ENCODE measurements at regions of chr14 and their contacts with region 1.

Region 1: GRCh38 chr14:64671591-64671990 is 32.6 kb upstream of the PLEKHG3 start:
- DNase-seq: peak; percentile 37 to 50 (median 47)
- ATAC-seq: peak; percentile 78
- H3K4me3 ChIP-seq: no peak overlapping the region
- H3K27ac ChIP-seq: no peak overlapping the region
- H3K4me1 ChIP-seq: no peaks in the 10 kb centered on the region
- H3K27me3 ChIP-seq: peaks cover 0 to 30% of the 10 kb centered on the region in 2 experiments; a peak in 3 of 5 replicates
- CTCF ChIP-seq: peak; percentile 44 to 62 (median 52); a peak in 5 of 6 replicates
- EP300 ChIP-seq: no peak
- POLR2A ChIP-seq: no peak
- RAD21 ChIP-seq: peak; percentile 62 to 82

Region 2: GRCh38 chr14:64736271-64737122 is 64.9 kb after region 1 on chr14:
- CTCF ChIA-PET with region 1: no interaction called
- POLR2A ChIA-PET with region 1: no interaction called
- in situ Hi-C with region 1: no loop called
- intact Hi-C with region 1: loop called (anchors 5 kb)
- DNase-seq: peak; percentile 16 to 23 (median 20)
- ATAC-seq: peak; percentile 80
- H3K4me3 ChIP-seq: no peak overlapping the region
- H3K27ac ChIP-seq: no peak overlapping the region
- H3K4me1 ChIP-seq: peaks cover 0 to 4% of the 10 kb centered on the region in 2 experiments; a peak in 2 of 5 replicates
- H3K27me3 ChIP-seq: peaks cover 3 to 58% of the 10 kb centered on the region in 2 experiments; a peak in 4 of 5 replicates
- CTCF ChIP-seq: peak in 2 of 3 experiments; percentile 8 to 27; a peak in 1 of 6 replicates
- EP300 ChIP-seq: no peak
- POLR2A ChIP-seq: no peak
- RAD21 ChIP-seq: 0 out of 4 replicates have a peak, but pooled peaks of 1 of the 2 experiments have one; percentile 23

Region 3: DNA sequence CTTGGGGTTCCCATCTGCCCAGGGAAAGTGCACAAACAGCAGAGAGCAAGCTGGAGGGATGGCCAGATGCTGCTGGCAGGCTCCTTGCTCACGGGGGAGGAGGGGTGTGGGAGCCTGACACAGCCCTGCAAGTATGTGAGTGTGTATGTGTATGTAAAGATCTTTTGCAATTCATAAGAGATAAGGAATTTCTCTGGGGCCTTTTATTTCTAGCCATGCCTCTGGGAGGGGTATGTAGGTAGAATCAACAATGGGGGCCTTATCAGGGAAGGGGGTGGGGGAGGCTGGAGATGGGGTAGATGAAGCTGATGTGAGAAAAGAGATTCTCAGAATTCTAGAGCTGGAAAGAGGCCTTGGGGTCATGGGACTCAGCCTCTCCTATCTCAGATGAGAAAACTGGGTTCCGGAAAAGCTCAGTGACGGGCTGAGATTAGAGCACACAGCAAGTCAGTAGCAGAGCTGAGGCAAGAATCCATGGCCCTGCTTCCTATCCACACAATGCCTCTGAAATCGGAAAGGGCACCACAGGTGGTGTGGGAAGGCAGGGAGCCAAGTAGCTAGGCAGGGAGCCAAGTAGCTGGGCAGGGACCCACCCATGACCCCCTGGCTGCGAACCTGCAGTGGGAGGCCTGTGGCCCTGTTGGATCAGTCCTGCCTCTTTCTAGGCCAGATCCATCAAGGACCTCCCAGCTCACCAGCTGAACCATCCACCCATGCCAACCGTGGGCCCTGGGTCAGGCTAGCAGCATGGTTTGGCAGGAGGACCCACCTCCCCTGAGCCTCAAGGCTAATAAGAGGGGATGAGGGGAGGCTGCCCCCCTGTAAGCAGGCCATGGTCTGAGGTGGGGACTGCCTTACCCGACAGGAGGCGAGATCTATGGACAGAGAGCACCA is 87.3 kb after region 1 on chr14:
- CTCF ChIA-PET with region 1: no interaction called
- POLR2A ChIA-PET with region 1: no interaction called
- in situ Hi-C with region 1: loop called (anchors 5 kb)
- intact Hi-C with region 1: loop called (anchors 5 kb)
- DNase-seq: no peak
- ATAC-seq: no peak
- H3K4me3 ChIP-seq: no peak overlapping the region
- H3K27ac ChIP-seq: no peak overlapping the region
- H3K4me1 ChIP-seq: peaks cover 12 to 19% of the 10 kb centered on the region in 2 experiments; a peak in 4 of 5 replicates
- H3K27me3 ChIP-seq: peaks cover 2 to 29% of the 10 kb centered on the region in 2 experiments; a peak in 3 of 5 replicates
- CTCF ChIP-seq: no peak
- EP300 ChIP-seq: no peak
- POLR2A ChIP-seq: no peak
- RAD21 ChIP-seq: no peak

Region 4: DNA sequence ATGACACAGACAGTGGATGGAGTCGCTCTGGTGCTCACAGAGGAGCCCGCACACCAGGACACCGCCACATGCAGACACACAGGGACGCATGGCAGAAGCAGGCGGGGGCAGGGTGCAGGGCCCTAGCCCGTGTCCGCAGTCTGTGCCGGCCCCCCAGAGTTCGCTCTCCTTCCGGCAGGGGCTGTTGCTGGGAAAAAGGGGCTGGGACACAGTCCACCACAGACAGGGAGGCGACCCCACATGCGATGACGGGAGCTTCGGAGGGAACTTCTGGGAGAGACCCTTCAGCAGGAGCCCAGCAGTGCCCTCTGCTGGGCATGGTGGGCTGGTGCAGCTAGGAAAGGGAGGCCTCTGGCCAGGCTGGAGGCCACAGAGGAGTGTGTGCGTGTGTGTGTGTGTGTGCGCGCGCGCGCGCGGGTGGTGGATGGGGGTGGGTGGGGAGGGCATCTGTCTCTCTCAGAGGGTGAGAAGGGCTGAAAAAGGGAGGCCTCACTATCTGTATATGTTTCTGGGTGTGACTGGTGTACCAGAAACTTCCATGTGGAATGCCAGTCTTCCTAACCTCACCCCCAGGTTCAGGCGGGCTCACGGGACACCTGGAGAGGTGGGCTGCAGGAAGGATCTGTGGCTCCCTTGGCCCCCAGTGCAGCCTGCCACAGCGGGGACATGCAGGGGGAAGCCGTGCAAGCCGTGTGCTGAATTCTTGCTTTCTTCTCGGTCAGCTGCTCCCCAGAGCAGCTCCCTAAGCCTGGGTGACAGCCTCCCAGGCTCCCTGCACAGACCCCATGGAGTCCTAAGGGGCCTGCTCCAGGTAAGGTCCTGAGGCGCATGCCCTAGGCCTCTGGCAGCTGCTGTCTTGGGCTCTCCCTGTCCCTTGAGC is 93.3 kb after region 1 on chr14:
- CTCF ChIA-PET with region 1: interaction called, 3 read pairs
- POLR2A ChIA-PET with region 1: no interaction called
- in situ Hi-C with region 1: no loop called
- intact Hi-C with region 1: loop called (anchors 5 kb)
- DNase-seq: peak; percentile 55 to 66 (median 63)
- ATAC-seq: peak; percentile 71
- H3K4me3 ChIP-seq: no peak overlapping the region
- H3K27ac ChIP-seq: no peak overlapping the region
- H3K4me1 ChIP-seq: peaks cover 12 to 30% of the 10 kb centered on the region in 2 experiments; a peak in 4 of 5 replicates
- H3K27me3 ChIP-seq: no peaks in the 10 kb centered on the region
- CTCF ChIP-seq: peak; percentile 62 to 71 (median 63)
- EP300 ChIP-seq: no peak
- POLR2A ChIP-seq: no peak
- RAD21 ChIP-seq: peak; percentile 29 to 56

Region 5: GRCh38 chr14:64891839-64892375 is 220.3 kb after region 1 on chr14:
- CTCF ChIA-PET with region 1: interaction called, 3 read pairs
- POLR2A ChIA-PET with region 1: no interaction called
- in situ Hi-C with region 1: no loop called
- intact Hi-C with region 1: loop called (anchors 5 kb)
- DNase-seq: peak in 3 of 4 experiments; percentile 23 to 72 (median 30)
- ATAC-seq: peak; percentile 94
- H3K4me3 ChIP-seq: no peak overlapping the region
- H3K27ac ChIP-seq: no peak overlapping the region
- H3K4me1 ChIP-seq: no peaks in the 10 kb centered on the region; a peak in 3 of 5 replicates
- H3K27me3 ChIP-seq: no peaks in the 10 kb centered on the region
- CTCF ChIP-seq: peak; percentile 53 to 75 (median 61); a peak in 5 of 6 replicates
- EP300 ChIP-seq: no peak
- POLR2A ChIP-seq: no peak
- RAD21 ChIP-seq: peak; percentile 92 to 99

Region 6: GRCh38 chr14:64986578-64987571 is 315.3 kb after region 1 on chr14 and contains the start of gene FNTB:
- CTCF ChIA-PET with region 1: no interaction called
- POLR2A ChIA-PET with region 1: no interaction called
- in situ Hi-C with region 1: no loop called
- intact Hi-C with region 1: loop called (anchors 10 kb)
- DNase-seq: peak; percentile 86 to 93 (median 88)
- ATAC-seq: peak; percentile 99
- H3K4me3 ChIP-seq: peak within 1 kb of the TSS; percentile 67
- H3K27ac ChIP-seq: peak within 1 kb of the TSS; percentile 83
- H3K4me1 ChIP-seq: peaks cover 0 to 4% of the 10 kb centered on the region in 2 experiments; a peak in 3 of 5 replicates
- H3K27me3 ChIP-seq: no peaks in the 10 kb centered on the region; a peak in 1 of 5 replicates
- CTCF ChIP-seq: peak; percentile 82 to 94 (median 93)
- EP300 ChIP-seq: 0 out of 2 replicates have a peak, but pooled peaks have one; percentile 34
- POLR2A ChIP-seq: peak; percentile 84
- RAD21 ChIP-seq: peak; percentile 84 to 94
- polyA plus RNA-seq, gene FNTB: 14.1 to 23.2 TPM